WTC11 (cell line): ENCODE measurements at regions of chr1 and their contacts with region 1.

Region 1: DNA sequence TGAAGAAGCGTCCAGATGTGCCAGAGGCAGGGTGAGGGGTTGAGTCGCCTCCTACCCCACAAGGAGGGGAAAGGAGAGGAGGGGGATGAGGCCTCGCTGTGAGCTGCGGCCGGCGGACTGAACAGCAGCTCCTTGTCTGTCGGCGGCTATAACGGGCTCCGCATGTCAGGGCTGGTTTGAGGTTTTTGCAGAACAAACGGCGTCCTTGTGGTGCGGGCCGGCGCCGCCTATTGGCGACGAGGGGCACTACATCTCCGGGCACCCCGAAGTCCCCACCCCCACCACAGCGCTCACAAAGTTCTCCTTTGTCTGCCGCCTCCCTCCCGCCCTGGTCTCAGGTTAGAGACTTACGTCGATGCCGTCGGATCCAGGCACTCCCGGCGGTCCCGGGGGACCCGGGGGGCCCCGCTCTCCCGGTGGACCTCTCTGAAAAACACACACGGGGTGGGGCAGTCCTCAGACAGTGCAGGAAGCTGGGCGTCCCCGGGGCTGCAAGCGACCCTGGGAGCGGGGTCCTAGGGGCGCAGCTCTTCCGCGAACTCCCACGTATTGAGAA is 1.8 kb downstream of the COL9A2 start:
- DNase-seq: peak; percentile 89
- ATAC-seq: peak; percentile 65
- H3K4me3 Mint-ChIP-seq: peak overlapping the region; percentile 73
- H3K27ac Mint-ChIP-seq: no peak overlapping the region
- H3K4me1 Mint-ChIP-seq: peaks cover 20% of the 10 kb centered on the region
- H3K27me3 Mint-ChIP-seq: peaks cover 80% of the 10 kb centered on the region
- CTCF ChIP-seq: peak; percentile 96

Region 2: DNA sequence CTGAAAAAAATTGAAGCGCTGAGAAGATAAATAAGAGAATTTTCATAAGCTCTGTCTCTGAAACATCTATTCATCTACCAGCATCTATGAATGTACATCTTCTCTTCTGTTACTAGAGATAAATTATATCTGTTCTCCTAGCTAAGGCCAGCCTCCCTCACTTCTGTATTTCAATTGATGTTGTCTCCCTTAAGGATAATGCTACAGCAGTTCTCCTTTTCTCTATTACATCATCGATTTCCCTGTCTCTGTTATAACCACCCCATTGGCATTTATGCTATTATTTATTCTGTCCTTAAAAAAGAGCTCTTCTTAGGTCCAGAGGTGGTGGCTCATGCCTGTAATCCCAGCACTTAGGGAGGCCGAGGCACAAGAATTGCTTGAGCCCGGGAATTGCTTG is 110.5 kb before region 1 on chr1:
- CTCF ChIA-PET with region 1: no interaction called
- POLR2A ChIA-PET with region 1: no interaction called
- DNase-seq: no peak
- ATAC-seq: no peak
- H3K4me3 Mint-ChIP-seq: no peak overlapping the region
- H3K27ac Mint-ChIP-seq: no peak overlapping the region
- H3K4me1 Mint-ChIP-seq: no peaks in the 10 kb centered on the region
- H3K27me3 Mint-ChIP-seq: no peaks in the 10 kb centered on the region
- CTCF ChIP-seq: no peak

Region 3: GRCh38 chr1:40241362-40241761 is 74.0 kb before region 1 on chr1:
- CTCF ChIA-PET with region 1: interaction called, 11 read pairs
- POLR2A ChIA-PET with region 1: interaction called, 6 read pairs
- DNase-seq: no peak
- ATAC-seq: no peak
- H3K4me3 Mint-ChIP-seq: no peak overlapping the region
- H3K27ac Mint-ChIP-seq: peak overlapping the region; percentile 70
- H3K4me1 Mint-ChIP-seq: no peaks in the 10 kb centered on the region
- H3K27me3 Mint-ChIP-seq: no peaks in the 10 kb centered on the region
- CTCF ChIP-seq: no peak

Region 4: GRCh38 chr1:40291293-40291692 is 24.0 kb before region 1 on chr1:
- CTCF ChIA-PET with region 1: interaction called, 12 read pairs
- POLR2A ChIA-PET with region 1: no interaction called
- DNase-seq: no peak
- ATAC-seq: no peak
- H3K4me3 Mint-ChIP-seq: no peak overlapping the region
- H3K27ac Mint-ChIP-seq: no peak overlapping the region
- H3K4me1 Mint-ChIP-seq: peaks cover 12% of the 10 kb centered on the region
- H3K27me3 Mint-ChIP-seq: no peaks in the 10 kb centered on the region
- CTCF ChIP-seq: no peak

Region 5: GRCh38 chr1:40373338-40374283 is 58.3 kb after region 1 on chr1 and contains the start of gene SMAP2:
- CTCF ChIA-PET with region 1: interaction called, 24 read pairs
- POLR2A ChIA-PET with region 1: no interaction called
- DNase-seq: peak; percentile 97
- ATAC-seq: peak; percentile 98
- H3K4me3 Mint-ChIP-seq: peak within 1 kb of the TSS; percentile 89
- H3K27ac Mint-ChIP-seq: peak within 1 kb of the TSS; percentile 23; the same call in 1 of the 2 replicates
- H3K4me1 Mint-ChIP-seq: peaks cover 15% of the 10 kb centered on the region
- H3K27me3 Mint-ChIP-seq: peaks cover 13% of the 10 kb centered on the region
- CTCF ChIP-seq: no peak
- total RNA-seq, gene SMAP2: 4.9 to 5.7 TPM (median 5.7 TPM) in 3 replicates